SK-N-SH (cell line): ENCODE measurements at regions of chr22 and their contacts with region 1.

Region 1: DNA sequence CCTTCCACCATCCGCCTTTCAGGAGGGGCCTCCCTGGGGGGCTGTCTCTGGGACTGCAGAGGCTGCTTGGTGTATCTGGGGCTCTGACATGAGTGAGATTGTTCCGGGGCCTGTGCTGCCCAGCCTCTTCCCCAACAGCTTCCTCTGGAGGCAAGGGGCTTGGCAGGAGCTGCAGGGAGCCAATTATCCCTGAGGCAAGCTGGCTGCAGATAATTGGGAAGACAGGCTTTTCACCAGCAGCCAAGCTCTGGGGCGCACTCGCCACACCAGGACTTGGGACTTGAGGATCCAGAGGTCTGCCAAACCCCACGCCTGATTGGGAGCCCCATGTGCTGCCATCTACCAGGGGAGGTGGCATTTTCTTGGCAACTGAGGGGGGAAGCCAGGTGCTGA is 15.6 kb upstream of the RTN4R start:
- DNase-seq: peak; percentile 52
- H3K4me3 ChIP-seq: no peak overlapping the region
- H3K27ac ChIP-seq: no peak overlapping the region
- H3K4me1 ChIP-seq: peaks cover 0 to 7% of the 10 kb centered on the region in 2 experiments; a peak in 1 of 4 replicates
- H3K27me3 ChIP-seq: no peaks in the 10 kb centered on the region
- CTCF ChIP-seq: no peak
- EP300 ChIP-seq: no peak
- RAD21 ChIP-seq: no peak

Region 2: DNA sequence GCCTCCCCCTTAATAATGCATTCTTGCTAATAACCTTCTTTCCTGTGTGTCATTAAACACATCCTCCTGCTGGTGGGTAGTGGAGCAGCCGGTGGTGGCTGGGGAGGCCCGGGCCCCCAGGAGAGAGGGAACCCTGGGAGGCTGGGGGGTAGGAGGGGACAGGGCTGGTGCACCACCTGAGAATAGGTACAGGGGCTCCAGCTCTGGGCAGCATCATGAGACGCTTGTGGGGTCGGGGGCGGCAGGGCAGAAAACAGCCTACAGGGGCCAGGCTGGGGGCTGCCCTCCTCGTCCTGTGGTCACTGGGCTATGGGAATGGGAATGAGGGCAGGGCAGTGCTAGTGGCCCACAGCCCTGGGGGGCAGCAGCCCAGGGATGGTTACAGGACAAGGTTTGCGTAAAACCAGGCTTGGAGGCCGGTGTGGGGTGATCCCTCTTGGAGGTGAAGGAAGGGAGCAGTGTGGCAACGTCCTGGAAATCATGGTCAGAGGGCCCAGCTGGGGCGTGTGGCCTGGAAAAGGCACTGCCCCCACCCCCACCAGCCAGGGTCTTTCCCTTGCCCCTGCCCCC is 114.3 kb before region 1 on chr22:
- CTCF ChIA-PET with region 1: interaction called, 15 read pairs
- POLR2A ChIA-PET with region 1: no interaction called
- DNase-seq: no peak
- H3K4me3 ChIP-seq: no peak overlapping the region
- H3K27ac ChIP-seq: no peak overlapping the region
- H3K4me1 ChIP-seq: peaks cover 0 to 2% of the 10 kb centered on the region in 2 experiments; a peak in 1 of 4 replicates
- H3K27me3 ChIP-seq: no peaks in the 10 kb centered on the region; the same call in 1 of the 2 replicates
- CTCF ChIP-seq: no peak
- EP300 ChIP-seq: no peak
- RAD21 ChIP-seq: no peak

Region 3: GRCh38 chr22:20238536-20238900 is 45.2 kb before region 1 on chr22:
- CTCF ChIA-PET with region 1: interaction called, 18 read pairs
- POLR2A ChIA-PET with region 1: no interaction called
- DNase-seq: peak; percentile 89
- H3K4me3 ChIP-seq: no peak overlapping the region
- H3K27ac ChIP-seq: no peak overlapping the region
- H3K4me1 ChIP-seq: peaks cover 0 to 30% of the 10 kb centered on the region in 2 experiments; a peak in 1 of 4 replicates
- H3K27me3 ChIP-seq: no peaks in the 10 kb centered on the region
- CTCF ChIP-seq: peak; percentile 43
- EP300 ChIP-seq: no peak
- RAD21 ChIP-seq: peak; percentile 67

Region 4: DNA sequence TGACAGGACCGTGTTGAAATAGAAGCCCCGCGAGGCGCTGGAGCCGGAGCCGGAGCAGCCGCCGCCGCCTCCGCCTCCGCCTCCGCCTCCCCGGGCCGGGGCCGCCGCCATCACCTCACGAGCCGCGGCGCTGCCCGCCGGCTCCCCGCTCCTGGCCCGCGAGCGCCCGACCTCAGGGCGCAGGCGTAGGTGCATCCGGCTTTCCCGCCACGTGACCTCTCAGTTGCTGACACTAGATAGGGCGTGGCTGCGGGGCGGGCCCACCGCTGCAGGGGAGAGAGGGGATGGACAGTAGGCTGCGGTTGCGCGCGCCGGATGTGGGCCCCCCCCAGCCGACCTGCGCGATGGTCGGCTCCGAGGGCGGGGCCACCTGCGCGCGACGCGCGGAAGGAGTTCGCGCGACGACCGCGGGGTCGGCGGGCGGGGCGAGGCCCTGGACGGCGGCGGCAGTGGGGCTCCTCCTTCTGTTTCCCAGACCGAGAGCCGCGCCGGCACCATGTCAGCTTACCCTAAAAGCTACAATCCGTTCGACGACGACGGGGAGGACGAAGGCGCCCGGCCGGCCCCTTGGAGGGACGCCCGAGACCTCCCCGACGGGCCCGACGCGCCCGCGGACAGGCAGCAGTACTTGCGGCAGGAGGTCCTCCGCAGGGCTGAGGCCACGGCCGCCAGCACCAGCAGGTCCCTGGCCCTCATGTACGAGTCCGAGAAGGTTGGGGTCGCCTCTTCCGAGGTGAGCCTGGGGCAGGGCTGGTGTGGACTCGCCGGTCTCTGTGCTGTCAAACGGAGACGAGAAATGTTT is 575.1 kb after region 1 on chr22 and contains the starts of genes PI4KA and SNAP29:
- CTCF ChIA-PET with region 1: no interaction called
- POLR2A ChIA-PET with region 1: no interaction called
- DNase-seq: peak; percentile 100
- H3K4me3 ChIP-seq: peak within 1 kb of the TSS; percentile 72 to 88
- H3K27ac ChIP-seq: peak within 1 kb of the TSS; percentile 71 to 73; a peak in 3 of 4 replicates
- H3K4me1 ChIP-seq: peaks cover 11 to 16% of the 10 kb centered on the region in 2 experiments; a peak in 2 of 4 replicates
- H3K27me3 ChIP-seq: no peaks in the 10 kb centered on the region
- CTCF ChIP-seq: no peak
- EP300 ChIP-seq: peak in 1 of 2 experiments; percentile 43; a peak in 1 of 4 replicates
- RAD21 ChIP-seq: no peak
- polyA plus RNA-seq, gene PI4KA: 26.3 and 30.0 TPM in 2 replicates
- polyA plus RNA-seq, gene SNAP29: 35.7 and 37.3 TPM in 2 replicates